ENCODE measurements at regions of chr14 and their contacts with region 1.

Region 1: GRCh38 chr14:31360919-31361662 is 59.3 kb downstream of the HEATR5A start:
- DNase-seq: no peak
- H3K4me3 ChIP-seq: no peak overlapping the region
- H3K4me3 Mint-ChIP-seq: no peak overlapping the region
- H3K27ac Mint-ChIP-seq: no peak overlapping the region
- H3K4me1 ChIP-seq: no peaks in the 10 kb centered on the region
- H3K4me1 Mint-ChIP-seq: no peaks in the 10 kb centered on the region
- H3K27me3 ChIP-seq: no peaks in the 10 kb centered on the region
- H3K27me3 Mint-ChIP-seq: no peaks in the 10 kb centered on the region
- CTCF ChIP-seq: no peak

Region 2: GRCh38 chr14:31127690-31128089 is 233.4 kb before region 1 on chr14:
- CTCF ChIA-PET with region 1: no interaction called
- POLR2A ChIA-PET with region 1: no interaction called
- intact Hi-C with region 1: loop called (anchors 5 kb)
- DNase-seq: peak in 1 of 2 experiments; percentile 25
- H3K4me3 ChIP-seq: no peak overlapping the region
- H3K4me3 Mint-ChIP-seq: no peak overlapping the region
- H3K27ac Mint-ChIP-seq: peak overlapping the region; percentile 43
- H3K4me1 ChIP-seq: no peaks in the 10 kb centered on the region
- H3K4me1 Mint-ChIP-seq: no peaks in the 10 kb centered on the region
- H3K27me3 ChIP-seq: no peaks in the 10 kb centered on the region
- H3K27me3 Mint-ChIP-seq: no peaks in the 10 kb centered on the region
- CTCF ChIP-seq: no peak

Measured in Caco-2 (cell line).